ENCODE measurements at regions of chr6 and their contacts with region 1.

Region 1: DNA sequence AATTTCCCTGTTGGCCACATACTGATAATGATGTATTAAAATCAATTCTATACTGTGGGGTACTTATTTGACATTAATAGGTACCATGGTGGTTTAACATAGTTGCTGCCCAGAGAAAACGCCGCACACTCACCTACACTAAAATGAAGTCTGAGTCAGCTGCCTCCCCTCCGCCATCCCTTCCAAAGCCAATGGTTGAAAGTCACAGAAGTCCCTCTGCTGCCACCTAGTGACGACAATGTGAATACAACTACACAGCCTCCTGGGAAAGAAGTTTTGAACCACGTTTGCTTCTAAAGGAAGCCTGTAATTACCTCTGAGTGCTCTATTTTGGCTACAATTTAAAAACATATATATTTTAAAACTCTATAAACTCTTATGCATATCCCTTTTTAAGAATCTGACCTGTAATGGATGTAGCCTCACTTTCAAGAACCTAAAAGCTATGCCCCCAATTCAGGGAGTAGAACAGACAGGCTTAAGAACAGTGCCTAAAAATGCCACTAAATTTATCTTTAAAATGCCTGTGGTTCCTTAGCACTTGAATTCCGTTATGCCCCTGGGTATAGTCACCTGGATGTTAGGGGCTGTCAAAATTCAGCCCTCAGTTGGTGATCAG is 20.6 kb upstream of the ECI2 start:
- DNase-seq: peak; percentile 63 to 85 (median 71)
- H3K4me3 ChIP-seq: no peak overlapping the region
- H3K27ac ChIP-seq: no peak overlapping the region
- H3K4me1 ChIP-seq: no peaks in the 10 kb centered on the region
- H3K27me3 ChIP-seq: no peaks in the 10 kb centered on the region
- CTCF ChIP-seq: peak; percentile 59 to 70 (median 68)
- EP300 ChIP-seq: no peak
- POLR2A ChIP-seq: no peak

Region 2: DNA sequence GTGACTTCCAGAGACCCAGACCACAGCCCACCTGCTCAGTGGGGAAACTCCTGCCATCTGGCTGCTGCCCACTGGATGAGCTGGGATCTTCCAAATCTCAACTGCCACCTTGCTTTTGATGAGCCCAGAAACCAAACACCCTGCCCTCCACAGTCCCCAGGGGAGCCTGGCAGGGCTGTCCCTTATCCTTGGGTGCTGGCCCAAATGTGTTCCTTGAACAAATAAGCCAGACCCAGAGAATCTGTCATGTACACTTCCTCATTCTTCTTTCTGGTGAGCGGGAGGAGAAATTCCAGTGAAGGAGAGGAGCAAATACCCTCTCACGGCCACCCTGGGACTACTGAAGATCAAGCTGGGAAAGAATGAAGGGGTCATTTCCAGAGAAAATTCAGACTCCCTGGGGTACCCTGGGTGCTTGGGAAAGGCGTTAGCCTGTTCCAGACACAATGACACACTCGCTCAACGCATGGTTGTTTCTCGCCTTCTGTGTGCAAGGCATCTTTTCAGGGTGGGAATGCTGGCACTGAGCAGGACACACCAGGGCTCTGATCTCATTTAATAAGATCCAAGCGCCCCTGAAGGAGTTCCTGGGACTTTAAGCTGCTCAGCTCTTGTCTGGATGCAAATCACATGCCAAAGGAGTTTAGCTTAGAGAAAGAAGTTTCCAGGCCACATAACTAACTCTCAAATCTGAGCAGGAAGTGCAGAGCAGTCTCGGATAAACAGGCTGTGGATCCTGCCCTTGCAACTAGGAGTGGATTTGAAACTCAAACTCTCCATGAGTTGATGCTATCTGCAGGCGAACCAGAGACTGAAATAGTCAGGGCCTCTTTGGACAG is 442.9 kb before region 1 on chr6:
- intact Hi-C with region 1: no loop called
- DNase-seq: no peak
- H3K4me3 ChIP-seq: no peak overlapping the region
- H3K27ac ChIP-seq: no peak overlapping the region
- H3K4me1 ChIP-seq: no peaks in the 10 kb centered on the region
- H3K27me3 ChIP-seq: no peaks in the 10 kb centered on the region
- CTCF ChIP-seq: no peak
- EP300 ChIP-seq: no peak
- POLR2A ChIP-seq: no peak

Region 3: GRCh38 chr6:4018172-4018905 is 137.6 kb before region 1 on chr6:
- intact Hi-C with region 1: loop called in 1 of 4 experiments (anchors 2 kb)
- DNase-seq: peak; percentile 95 to 96 (median 96)
- H3K4me3 ChIP-seq: peak overlapping the region; percentile 78
- H3K27ac ChIP-seq: peak overlapping the region; percentile 91 to 95
- H3K4me1 ChIP-seq: peaks cover 3% of the 10 kb centered on the region
- H3K27me3 ChIP-seq: no peaks in the 10 kb centered on the region
- CTCF ChIP-seq: peak in 2 of 3 donors; percentile 67 to 74
- EP300 ChIP-seq: no peak
- POLR2A ChIP-seq: peak; percentile 90

Region 4: DNA sequence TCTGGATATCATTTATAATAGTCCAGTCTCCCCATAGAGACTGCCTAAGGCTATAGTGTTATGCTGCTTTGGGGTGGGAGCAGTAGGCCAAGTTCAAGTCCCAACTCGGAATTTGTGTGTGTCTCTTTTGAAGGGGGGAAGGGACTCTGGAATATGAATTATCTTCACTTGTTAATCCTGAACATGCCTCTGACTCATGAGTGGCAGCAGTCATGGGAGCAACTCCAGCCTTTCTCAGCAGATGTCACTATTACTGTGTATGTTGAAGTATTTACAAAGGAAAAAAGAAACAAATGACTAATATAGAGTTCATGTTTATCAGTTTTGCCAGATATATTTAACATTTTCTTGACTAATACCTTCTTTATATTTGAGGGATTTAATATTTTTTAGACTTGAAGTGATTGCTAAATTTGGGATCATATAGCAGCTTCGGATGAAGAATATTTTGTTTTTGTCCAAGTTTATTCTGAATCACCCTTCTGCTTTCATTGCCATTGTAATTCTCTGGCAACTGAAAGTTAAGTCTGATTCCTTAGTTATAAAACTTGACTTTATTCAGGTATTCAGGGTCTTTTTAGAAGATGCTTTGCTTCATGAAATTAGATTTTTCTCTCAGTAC is 100.4 kb before region 1 on chr6:
- intact Hi-C with region 1: loop called in 1 of 4 experiments (anchors 10 kb)
- DNase-seq: no peak
- H3K4me3 ChIP-seq: no peak overlapping the region
- H3K27ac ChIP-seq: no peak overlapping the region
- H3K4me1 ChIP-seq: no peaks in the 10 kb centered on the region
- H3K27me3 ChIP-seq: no peaks in the 10 kb centered on the region
- CTCF ChIP-seq: peak in 1 of 3 donors; percentile 24
- EP300 ChIP-seq: no peak
- POLR2A ChIP-seq: no peak

Region 5: DNA sequence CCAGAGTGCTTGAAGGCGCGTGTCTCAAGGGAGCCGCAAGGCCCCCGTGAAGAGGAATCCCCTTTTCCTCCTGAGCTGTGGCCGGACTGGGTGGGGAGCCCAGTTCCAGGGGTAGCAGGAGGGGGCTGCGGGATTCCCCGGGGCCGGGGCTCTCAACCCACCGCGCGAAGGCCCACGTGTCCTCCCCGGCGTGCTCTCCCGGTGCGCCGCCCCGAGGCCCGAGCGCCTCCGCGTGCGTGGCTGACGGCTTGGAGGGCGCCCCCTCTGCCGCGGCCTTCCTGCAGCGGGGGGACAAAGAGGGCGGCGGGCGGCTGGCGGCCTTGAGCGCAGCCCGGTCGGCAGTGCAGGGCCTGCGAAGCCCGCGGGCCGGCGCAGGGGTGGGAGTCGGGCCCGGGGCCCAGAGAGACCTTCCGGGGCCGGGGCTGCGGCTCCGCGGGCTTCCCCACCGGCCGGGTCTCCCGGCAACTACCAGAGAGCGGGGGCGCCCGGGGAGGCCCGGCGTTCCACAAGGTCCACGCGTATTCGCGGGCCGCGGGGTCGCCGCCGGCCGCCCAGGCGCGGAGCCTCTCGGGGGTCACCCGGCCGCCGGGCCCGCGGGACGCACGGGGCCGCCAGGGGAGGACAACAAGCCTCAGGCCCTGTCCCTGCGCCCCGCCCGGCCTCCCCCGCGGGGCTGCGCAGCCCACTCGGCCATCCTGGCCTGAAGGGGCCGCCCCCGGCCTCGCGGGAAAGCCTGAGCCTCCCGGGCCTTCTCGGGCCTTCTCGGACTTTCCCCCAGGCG is 77.1 kb before region 1 on chr6 and contains the start of gene FAM217A:
- intact Hi-C with region 1: loop called in 1 of 4 experiments (anchors 10 kb)
- DNase-seq: no peak
- H3K4me3 ChIP-seq: no peak within 1 kb of the TSS
- H3K27ac ChIP-seq: no peak within 1 kb of the TSS
- H3K4me1 ChIP-seq: no peaks in the 10 kb centered on the region
- H3K27me3 ChIP-seq: no peaks in the 10 kb centered on the region
- CTCF ChIP-seq: no peak
- EP300 ChIP-seq: no peak
- POLR2A ChIP-seq: no peak
- total RNA-seq, gene FAM217A: not detected

Measured in ovary (tissue), 10 donors.